ENCODE measurements at regions of chr15 and their contacts with region 1.

Region 1: GRCh38 chr15:74615508-74616365 is at the start of gene CLK3:
- DNase-seq: peak; percentile 99
- ATAC-seq: peak; percentile 90
- H3K4me3 Mint-ChIP-seq: peak within 1 kb of the TSS; percentile 93
- H3K27ac Mint-ChIP-seq: peak within 1 kb of the TSS; percentile 95
- H3K4me1 Mint-ChIP-seq: peaks cover 42% of the 10 kb centered on the region
- H3K27me3 Mint-ChIP-seq: no peaks in the 10 kb centered on the region
- total RNA-seq, gene CLK3: 130 to 175 TPM

Region 2: DNA sequence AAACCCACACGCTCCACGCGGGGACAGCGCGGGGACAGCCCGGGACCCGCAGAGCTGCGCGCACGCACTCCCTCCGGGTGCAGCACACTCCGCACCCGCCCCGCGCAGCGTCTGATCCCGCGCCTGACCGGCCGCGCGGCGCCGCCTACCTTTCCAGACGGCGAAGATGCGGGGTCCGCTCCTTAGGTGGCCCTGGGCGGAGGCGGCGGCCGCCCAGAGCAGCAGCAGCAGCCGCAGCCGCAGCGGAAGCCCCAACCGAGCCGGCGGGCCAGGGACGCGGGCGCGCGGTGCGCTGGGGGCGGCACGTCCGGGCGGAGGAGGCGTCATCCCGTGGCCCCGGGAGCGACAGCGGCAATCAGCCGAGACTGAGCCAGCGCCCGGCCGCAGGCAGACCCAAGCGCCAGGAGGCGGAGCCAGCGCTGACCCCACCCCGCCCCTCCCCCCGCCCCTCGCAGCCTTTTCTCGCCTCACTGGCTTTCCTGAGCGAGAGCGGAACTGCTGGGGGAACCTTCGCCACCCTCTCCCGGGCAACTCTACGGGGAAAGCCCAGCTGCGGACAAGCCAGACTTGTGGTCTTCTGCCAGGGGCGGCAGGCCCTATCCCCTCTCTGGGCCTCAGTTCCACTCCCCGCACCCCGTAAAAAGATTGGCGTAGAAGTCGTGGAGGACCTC is 182.0 kb before region 1 on chr15 and contains the start of gene SEMA7A:
- CTCF ChIA-PET with region 1: no interaction called
- POLR2A ChIA-PET with region 1: no interaction called
- intact Hi-C with region 1: loop called in 1 of 2 experiments (anchors 1 kb)
- DNase-seq: peak; percentile 90
- ATAC-seq: peak; percentile 89
- H3K4me3 Mint-ChIP-seq: peak within 1 kb of the TSS; percentile 83
- H3K27ac Mint-ChIP-seq: peak within 1 kb of the TSS; percentile 56
- H3K4me1 Mint-ChIP-seq: peaks cover 59% of the 10 kb centered on the region
- H3K27me3 Mint-ChIP-seq: no peaks in the 10 kb centered on the region
- total RNA-seq, gene SEMA7A: 57.3 to 57.7 TPM

Region 3: DNA sequence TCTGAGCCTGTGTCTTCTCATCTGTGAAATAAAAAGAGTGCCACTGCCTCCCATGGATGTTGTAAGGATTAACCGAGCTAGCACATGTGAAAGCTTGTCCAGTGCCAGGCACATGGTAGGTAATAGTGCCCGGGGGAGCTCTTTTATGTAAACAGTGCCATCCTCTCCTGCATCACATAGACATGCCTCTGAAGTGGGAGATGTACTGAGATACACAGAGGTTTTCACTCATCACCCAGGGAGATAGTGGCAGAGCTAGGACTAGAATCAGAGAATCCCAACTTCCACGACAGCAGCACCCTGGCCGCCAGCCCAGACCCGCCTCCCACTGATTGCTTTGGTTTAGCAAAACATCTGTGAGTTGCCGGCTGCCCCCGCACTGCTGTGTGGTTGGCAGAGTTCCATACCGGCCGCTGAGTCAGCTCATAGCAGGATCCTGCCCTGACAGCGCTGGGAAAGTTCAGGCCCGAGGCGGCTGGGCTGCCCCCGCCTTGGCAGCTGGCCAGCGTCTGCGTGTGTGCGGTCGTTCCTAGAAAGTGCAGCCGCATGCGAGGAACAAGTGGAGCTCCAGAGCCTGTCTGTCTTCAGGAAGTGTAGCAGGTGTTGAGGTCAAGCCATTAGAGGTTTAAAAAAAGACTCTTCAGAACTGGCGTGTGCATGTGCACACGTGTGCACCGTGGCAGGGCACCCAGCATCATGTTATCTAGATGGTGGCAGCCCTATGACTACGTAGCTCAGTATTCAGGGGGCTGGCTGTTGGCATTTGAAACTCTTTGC is 69.7 kb before region 1 on chr15:
- CTCF ChIA-PET with region 1: interaction called, 13 read pairs
- POLR2A ChIA-PET with region 1: interaction called, 17 read pairs
- intact Hi-C with region 1: loop called in 1 of 2 experiments (anchors 1 kb)
- DNase-seq: peak; percentile 98
- ATAC-seq: peak; percentile 72
- H3K4me3 Mint-ChIP-seq: peak overlapping the region; percentile 29
- H3K27ac Mint-ChIP-seq: peak overlapping the region; percentile 44
- H3K4me1 Mint-ChIP-seq: peaks cover 62% of the 10 kb centered on the region
- H3K27me3 Mint-ChIP-seq: peaks cover 2% of the 10 kb centered on the region

Region 4: DNA sequence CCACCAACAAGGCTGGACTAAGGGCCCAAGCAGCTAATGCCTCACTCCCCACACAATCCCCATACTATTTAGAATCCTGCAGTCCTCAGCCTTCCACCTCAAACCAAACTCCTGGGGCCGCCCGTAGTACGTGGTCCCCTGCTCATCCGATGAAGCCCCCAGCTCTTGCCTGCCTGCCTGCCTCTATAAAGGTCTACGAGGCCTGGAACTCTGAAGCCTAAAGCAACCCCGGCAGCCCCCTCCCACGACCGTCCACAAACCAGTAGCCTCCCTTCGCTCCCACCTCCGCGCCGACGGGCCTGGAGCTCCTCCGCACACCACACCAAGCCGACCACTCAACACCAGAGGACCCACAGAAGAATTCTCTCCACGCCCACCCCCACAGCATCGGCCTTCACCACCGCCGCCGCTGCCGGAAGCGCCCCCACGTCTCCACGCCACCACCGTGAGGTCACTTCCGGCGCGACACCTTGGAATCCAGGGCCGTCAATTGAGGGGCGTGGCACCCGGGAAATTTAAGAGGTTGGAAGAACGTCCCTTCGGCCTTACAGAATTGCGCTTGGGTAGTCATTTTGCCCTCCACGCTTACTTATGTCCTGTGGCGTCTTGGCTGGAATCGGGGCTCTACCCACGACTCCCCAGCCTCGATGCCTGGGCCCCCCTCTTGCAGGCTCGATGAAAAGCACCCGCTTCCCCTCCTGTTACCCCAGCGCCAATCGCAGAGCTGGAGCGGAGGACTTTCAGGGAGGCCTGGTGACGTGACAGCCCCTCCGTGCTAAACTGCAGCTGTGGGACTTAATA is 80.1 kb after region 1 on chr15 and contains the start of gene EDC3:
- CTCF ChIA-PET with region 1: no interaction called
- POLR2A ChIA-PET with region 1: no interaction called
- intact Hi-C with region 1: loop called in 1 of 2 experiments (anchors 1 kb)
- DNase-seq: peak; percentile 92
- ATAC-seq: peak; percentile 91
- H3K4me3 Mint-ChIP-seq: peak within 1 kb of the TSS; percentile 98
- H3K27ac Mint-ChIP-seq: peak within 1 kb of the TSS; percentile 99
- H3K4me1 Mint-ChIP-seq: peaks cover 27% of the 10 kb centered on the region
- H3K27me3 Mint-ChIP-seq: no peaks in the 10 kb centered on the region
- total RNA-seq, gene EDC3: 44.7 to 45.0 TPM

Region 5: DNA sequence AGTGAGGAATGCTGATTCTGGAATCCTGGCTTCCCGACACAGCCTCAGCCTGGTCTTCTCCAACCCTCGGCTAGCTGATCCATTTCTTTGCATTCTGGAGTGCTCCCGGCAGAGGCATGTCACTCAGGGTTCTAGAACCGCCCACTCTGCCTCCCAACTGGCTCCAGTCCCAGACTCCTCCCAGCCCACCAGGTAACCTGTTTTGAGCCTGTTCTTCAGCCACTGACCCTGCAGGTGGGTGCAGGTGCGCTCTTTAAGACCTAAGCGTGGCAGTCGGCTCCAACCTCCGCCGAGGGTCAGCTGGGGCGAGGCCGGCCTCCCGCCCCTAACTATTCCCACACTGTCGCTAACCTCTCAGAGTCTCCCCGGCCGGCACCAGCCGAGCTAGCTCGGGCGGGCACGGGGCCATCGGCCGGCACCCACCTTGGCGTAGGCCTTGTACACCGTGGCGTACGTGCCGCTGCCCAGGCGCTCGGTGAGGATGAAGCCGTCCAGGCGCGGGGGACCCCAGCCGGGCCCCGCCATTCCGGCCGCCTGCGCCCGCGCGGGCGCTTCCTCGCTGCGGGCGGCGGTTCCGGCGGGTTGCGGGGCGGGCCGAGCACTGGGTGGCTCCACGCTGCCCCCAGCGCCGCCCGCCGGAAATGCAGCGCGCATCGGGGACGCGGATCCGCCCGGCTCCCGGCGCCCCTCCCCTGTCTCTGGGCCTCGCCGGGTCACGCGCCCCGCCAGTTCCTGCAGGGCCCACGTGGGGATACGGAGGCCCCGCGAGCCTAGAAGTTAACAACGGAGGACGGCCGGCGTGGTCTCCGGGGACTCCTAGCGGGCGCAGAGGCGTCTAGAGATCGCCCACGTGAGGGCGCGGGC is 227.1 kb after region 1 on chr15 and contains the start of gene ULK3:
- CTCF ChIA-PET with region 1: no interaction called
- POLR2A ChIA-PET with region 1: no interaction called
- intact Hi-C with region 1: loop called in 1 of 2 experiments (anchors 1 kb)
- DNase-seq: peak; percentile 97
- ATAC-seq: peak; percentile 85
- H3K4me3 Mint-ChIP-seq: peak within 1 kb of the TSS; percentile 90
- H3K27ac Mint-ChIP-seq: peak within 1 kb of the TSS; percentile 90
- H3K4me1 Mint-ChIP-seq: peaks cover 45% of the 10 kb centered on the region
- H3K27me3 Mint-ChIP-seq: no peaks in the 10 kb centered on the region
- total RNA-seq, gene ULK3: 40.3 to 45.2 TPM

Region 6: DNA sequence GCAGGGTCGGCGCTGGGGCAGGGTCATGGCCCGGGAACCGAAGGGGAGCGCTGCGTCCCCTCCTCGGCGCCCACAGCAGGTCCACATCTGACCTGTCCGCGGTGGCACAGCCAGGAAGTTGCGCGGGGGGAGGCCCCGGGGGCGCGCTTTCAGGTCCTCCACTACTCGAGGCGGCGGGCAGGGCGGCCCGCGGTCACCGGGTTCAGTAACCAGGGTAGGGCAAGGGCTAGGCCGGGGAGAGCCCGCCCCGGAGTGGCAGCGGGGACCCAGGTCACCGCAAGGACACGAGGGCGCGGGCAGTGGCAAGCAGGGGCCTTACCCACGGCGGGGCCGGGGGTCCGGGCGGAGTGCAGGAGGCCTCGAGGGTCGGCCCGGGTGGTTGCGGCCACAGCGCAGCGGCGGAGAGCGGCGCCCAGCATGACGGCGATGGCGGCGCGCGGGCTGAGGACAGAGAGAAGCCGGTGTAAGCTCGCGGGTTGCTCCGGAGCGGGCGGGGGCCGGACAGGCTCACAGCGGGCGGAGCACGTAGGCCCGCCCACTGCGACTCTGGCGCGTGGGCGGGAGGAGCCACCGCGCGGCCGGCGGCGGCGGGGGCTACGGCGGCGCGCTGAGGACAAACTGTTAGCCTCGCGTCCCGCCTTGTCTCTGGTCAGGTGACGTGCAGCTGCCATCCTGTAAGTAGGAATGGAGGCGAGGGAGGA is 322.0 kb after region 1 on chr15 and contains the start of gene COX5A:
- CTCF ChIA-PET with region 1: no interaction called
- POLR2A ChIA-PET with region 1: no interaction called
- intact Hi-C with region 1: loop called in 1 of 2 experiments (anchors 1 kb)
- DNase-seq: peak; percentile 96
- ATAC-seq: peak; percentile 96
- H3K4me3 Mint-ChIP-seq: peak within 1 kb of the TSS; percentile 88
- H3K27ac Mint-ChIP-seq: peak within 1 kb of the TSS; percentile 91
- H3K4me1 Mint-ChIP-seq: peaks cover 31% of the 10 kb centered on the region
- H3K27me3 Mint-ChIP-seq: no peaks in the 10 kb centered on the region
- total RNA-seq, gene COX5A: 313 to 319 TPM

Region 7: GRCh38 chr15:75903331-75904239 is 1287.8 kb after region 1 on chr15 and contains the start of gene FBXO22:
- CTCF ChIA-PET with region 1: no interaction called
- POLR2A ChIA-PET with region 1: no interaction called
- intact Hi-C with region 1: loop called in 1 of 2 experiments (anchors 5 kb)
- DNase-seq: peak; percentile 97
- ATAC-seq: peak; percentile 97
- H3K4me3 Mint-ChIP-seq: peak within 1 kb of the TSS; percentile 97
- H3K27ac Mint-ChIP-seq: peak within 1 kb of the TSS; percentile 98
- H3K4me1 Mint-ChIP-seq: peaks cover 40% of the 10 kb centered on the region
- H3K27me3 Mint-ChIP-seq: no peaks in the 10 kb centered on the region
- total RNA-seq, gene FBXO22: 51.4 to 59.2 TPM

Measured in activated CD4-positive, alpha-beta T cell treated with anti-CD3 and anti-CD28 coated beads for 36 hours (primary cell).